Ascending aorta (tissue), 2 donors: ENCODE measurements at regions of chr9 and their contacts with region 1.

Region 1: DNA sequence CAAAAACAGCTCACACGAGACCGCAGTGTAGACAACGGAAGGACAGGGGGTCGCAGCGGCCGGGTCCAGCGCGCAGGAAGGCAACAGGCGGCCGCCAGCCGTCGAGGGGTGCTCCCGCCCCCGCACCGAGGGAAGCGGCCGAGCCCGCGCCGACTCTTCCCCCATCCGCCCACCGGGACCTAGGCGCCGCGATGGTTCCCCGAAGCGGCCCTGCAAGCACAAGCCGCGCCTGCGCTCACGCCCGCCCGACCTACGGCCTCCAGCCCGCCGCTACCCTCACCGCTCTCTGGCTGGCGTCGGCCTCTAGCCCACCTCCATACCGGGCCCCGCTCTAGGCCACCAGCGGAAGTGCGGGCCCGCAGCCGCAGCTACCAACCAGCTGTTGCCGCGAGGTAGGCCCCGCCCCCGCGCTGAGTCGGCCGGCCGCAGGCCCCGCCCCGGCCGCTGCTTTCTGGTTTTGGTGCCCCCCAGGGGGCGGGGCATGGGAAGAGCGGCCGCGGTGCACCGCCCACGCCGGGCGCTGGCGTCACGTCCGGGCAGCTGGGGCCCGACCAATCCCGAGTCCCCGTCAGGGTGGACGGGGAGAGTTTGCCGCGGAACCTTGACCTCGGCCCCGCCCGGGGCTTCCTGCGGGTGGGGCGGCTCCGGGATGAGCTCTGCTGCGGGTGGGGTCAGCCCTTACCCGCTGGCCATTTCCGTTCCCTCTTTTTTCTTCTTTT is at the start of gene SETX:
- DNase-seq: peak; percentile 89 to 99
- H3K4me3 ChIP-seq: peak within 1 kb of the TSS; percentile 99
- H3K27ac ChIP-seq: peak within 1 kb of the TSS; percentile 96
- H3K4me1 ChIP-seq: peaks cover 6 to 26% of the 10 kb centered on the region in 2 donors
- H3K27me3 ChIP-seq: no peaks in the 10 kb centered on the region
- CTCF ChIP-seq: no peak
- total RNA-seq, gene SETX: 31.2 TPM

Region 2: GRCh38 chr9:130682490-130683121 is 1672.2 kb before region 1 on chr9:
- intact Hi-C with region 1: loop called (anchors 10 kb)
- DNase-seq: peak in 1 of 2 donors; percentile 86
- H3K4me3 ChIP-seq: peak overlapping the region; percentile 60 to 77
- H3K27ac ChIP-seq: no peak overlapping the region
- H3K4me1 ChIP-seq: peaks cover 2 to 11% of the 10 kb centered on the region in 2 donors
- H3K27me3 ChIP-seq: no peaks in the 10 kb centered on the region
- CTCF ChIP-seq: peak; percentile 76 to 83 (median 79)

Region 3: GRCh38 chr9:131053896-131054295 is 1300.9 kb before region 1 on chr9:
- intact Hi-C with region 1: no loop called
- DNase-seq: no peak
- H3K4me3 ChIP-seq: no peak overlapping the region
- H3K27ac ChIP-seq: no peak overlapping the region
- H3K4me1 ChIP-seq: no peaks in the 10 kb centered on the region
- H3K27me3 ChIP-seq: no peaks in the 10 kb centered on the region
- CTCF ChIP-seq: no peak

Region 4: DNA sequence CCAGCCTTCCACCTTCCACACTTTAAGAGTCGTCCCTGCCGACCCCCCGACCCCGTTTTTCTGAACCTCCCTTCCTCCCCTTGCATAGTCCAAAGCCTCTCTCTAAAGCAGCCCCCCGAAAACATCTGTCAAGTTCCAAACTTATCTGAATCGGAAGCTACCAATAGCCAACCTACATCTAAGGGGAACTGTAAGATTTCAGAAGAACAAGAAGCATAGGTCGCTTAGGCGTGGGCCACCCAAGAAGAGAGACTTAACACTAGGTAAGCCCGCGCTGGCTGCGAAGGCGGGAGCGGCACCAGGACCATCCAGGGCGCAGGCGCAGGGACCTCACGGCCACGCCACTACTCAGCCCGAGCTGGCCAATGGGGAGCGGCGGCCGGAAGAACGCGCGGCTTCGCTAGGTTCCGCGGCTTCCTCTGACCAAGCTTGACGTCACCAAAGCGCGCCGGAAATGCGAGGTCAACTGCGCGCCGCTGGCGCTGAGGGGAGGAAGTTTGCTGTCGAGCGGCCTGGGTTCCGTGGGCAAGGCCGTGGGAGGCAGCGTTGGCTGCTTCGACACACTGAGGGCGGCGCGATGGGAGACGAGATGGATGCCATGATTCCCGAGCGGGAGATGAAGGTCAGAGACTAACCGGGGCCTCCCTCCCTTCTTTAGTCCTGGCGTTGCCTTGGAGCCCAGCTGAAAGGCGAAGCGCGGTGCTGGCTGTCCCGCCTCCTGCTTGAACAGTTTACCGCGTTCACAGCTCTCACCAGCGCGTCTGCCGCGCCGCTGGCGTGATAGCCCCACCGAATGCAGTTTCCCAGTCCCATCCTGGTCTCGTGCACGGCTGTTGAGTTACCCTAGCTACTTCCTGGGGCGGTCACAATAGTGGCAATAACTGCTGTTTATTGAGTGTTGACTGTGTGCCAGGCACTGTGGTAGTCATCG is 1229.4 kb before region 1 on chr9 and contains the start of gene NUP214:
- intact Hi-C with region 1: loop called (anchors 10 kb)
- DNase-seq: peak; percentile 90 to 99
- H3K4me3 ChIP-seq: peak within 1 kb of the TSS; percentile 60 to 99
- H3K27ac ChIP-seq: peak within 1 kb of the TSS; percentile 76 to 89
- H3K4me1 ChIP-seq: peaks cover 8 to 14% of the 10 kb centered on the region in 2 donors
- H3K27me3 ChIP-seq: no peaks in the 10 kb centered on the region
- CTCF ChIP-seq: no peak
- total RNA-seq, gene NUP214: 234 TPM

Region 5: GRCh38 chr9:132079391-132080091 is 275.3 kb before region 1 on chr9 and contains the start of gene MED27:
- intact Hi-C with region 1: loop called (anchors 5 kb)
- DNase-seq: peak; percentile 68 to 96
- H3K4me3 ChIP-seq: peak within 1 kb of the TSS; percentile 86 to 92
- H3K27ac ChIP-seq: peak within 1 kb of the TSS; percentile 62 to 75
- H3K4me1 ChIP-seq: peaks cover 0 to 35% of the 10 kb centered on the region in 2 donors
- H3K27me3 ChIP-seq: no peaks in the 10 kb centered on the region
- CTCF ChIP-seq: no peak
- total RNA-seq, gene MED27: 19.4 TPM

Region 6: GRCh38 chr9:132406554-132407122 is 51.8 kb after region 1 on chr9 and contains the start of gene TTF1:
- intact Hi-C with region 1: loop called (anchors 1 kb)
- DNase-seq: peak; percentile 38 to 94
- H3K4me3 ChIP-seq: peak within 1 kb of the TSS; percentile 69 to 90
- H3K27ac ChIP-seq: peak within 1 kb of the TSS in 1 of 2 donors; percentile 10
- H3K4me1 ChIP-seq: peaks cover 14 to 20% of the 10 kb centered on the region in 2 donors
- H3K27me3 ChIP-seq: no peaks in the 10 kb centered on the region
- CTCF ChIP-seq: no peak
- total RNA-seq, gene TTF1: 2.3 TPM

Region 7: GRCh38 chr9:133347985-133348717 is 993.4 kb after region 1 on chr9 and contains the starts of genes MED22 and RPL7A:
- intact Hi-C with region 1: loop called (anchors 10 kb)
- DNase-seq: peak; percentile 86 to 97
- H3K4me3 ChIP-seq: peak within 1 kb of the TSS; percentile 69 to 80
- H3K27ac ChIP-seq: peak within 1 kb of the TSS; percentile 86 to 94
- H3K4me1 ChIP-seq: peaks cover 6 to 22% of the 10 kb centered on the region in 2 donors
- H3K27me3 ChIP-seq: no peaks in the 10 kb centered on the region
- CTCF ChIP-seq: peak in 1 of 3 experiments; percentile 9
- total RNA-seq, gene MED22: 52.2 TPM
- total RNA-seq, gene RPL7A: 1,203 TPM